Naive thymus-derived CD4-positive, alpha-beta T cell (primary cell): ENCODE measurements at regions of chr20 and their contacts with region 1.

Region 1: DNA sequence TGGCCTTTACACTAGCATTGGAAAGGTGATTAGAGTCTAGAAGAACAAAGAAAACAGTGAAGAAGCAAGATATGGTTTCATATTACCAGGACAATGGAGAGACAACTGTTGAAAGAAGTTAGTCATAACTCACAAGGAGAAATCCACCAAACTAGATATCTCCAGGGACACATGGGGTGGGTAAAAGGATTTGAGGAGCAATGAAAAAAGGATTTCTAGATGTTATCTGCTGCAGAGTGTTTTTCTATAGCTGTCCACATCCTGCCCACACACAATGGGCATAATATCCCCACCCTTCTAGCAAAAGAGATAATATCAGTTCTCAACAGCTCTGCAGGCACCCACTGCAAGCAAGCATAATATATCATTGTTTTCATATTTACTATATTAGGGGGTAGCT is 303.1 kb downstream of the HAO1 start:
- DNase-seq: no peak
- ATAC-seq: no peak
- H3K4me3 ChIP-seq: no peak overlapping the region
- H3K4me3 Mint-ChIP-seq: no peak overlapping the region
- H3K27ac ChIP-seq: no peak overlapping the region
- H3K27ac Mint-ChIP-seq: no peak overlapping the region
- H3K4me1 ChIP-seq: no peaks in the 10 kb centered on the region
- H3K4me1 Mint-ChIP-seq: no peaks in the 10 kb centered on the region
- H3K27me3 ChIP-seq: no peaks in the 10 kb centered on the region
- H3K27me3 Mint-ChIP-seq: no peaks in the 10 kb centered on the region

Region 2: GRCh38 chr20:7650086-7650879 is 13.1 kb after region 1 on chr20:
- CTCF ChIA-PET with region 1: no interaction called
- POLR2A ChIA-PET with region 1: no interaction called
- intact Hi-C with region 1: no loop called
- DNase-seq: no peak
- ATAC-seq: no peak
- H3K4me3 ChIP-seq: no peak overlapping the region
- H3K4me3 Mint-ChIP-seq: no peak overlapping the region
- H3K27ac ChIP-seq: no peak overlapping the region
- H3K27ac Mint-ChIP-seq: no peak overlapping the region
- H3K4me1 ChIP-seq: no peaks in the 10 kb centered on the region
- H3K4me1 Mint-ChIP-seq: no peaks in the 10 kb centered on the region
- H3K27me3 ChIP-seq: no peaks in the 10 kb centered on the region
- H3K27me3 Mint-ChIP-seq: no peaks in the 10 kb centered on the region

Region 3: DNA sequence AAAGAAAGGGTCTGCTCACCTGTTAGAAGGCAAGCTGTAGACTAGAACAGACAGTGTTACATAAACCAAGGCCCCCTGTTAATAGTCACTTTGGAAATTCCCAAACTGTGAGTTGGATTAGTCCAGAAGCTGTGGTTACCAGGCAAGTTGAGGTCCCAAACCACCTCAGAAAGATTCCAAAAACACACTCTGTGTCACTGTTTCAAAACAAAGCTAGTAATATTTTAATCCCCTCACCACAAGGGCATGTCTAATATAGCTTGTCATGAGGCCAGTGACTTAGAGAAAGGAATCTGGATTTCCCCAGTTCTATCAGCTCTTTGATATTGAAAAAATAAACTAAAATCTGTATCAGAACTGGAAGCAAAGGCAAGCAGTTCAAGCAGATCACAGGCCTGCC is 58.5 kb after region 1 on chr20:
- CTCF ChIA-PET with region 1: no interaction called
- POLR2A ChIA-PET with region 1: no interaction called
- intact Hi-C with region 1: loop called in 1 of 2 experiments (anchors 10 kb)
- DNase-seq: no peak
- ATAC-seq: no peak
- H3K4me3 ChIP-seq: no peak overlapping the region
- H3K4me3 Mint-ChIP-seq: no peak overlapping the region
- H3K27ac ChIP-seq: no peak overlapping the region
- H3K27ac Mint-ChIP-seq: no peak overlapping the region
- H3K4me1 ChIP-seq: no peaks in the 10 kb centered on the region
- H3K4me1 Mint-ChIP-seq: no peaks in the 10 kb centered on the region
- H3K27me3 ChIP-seq: no peaks in the 10 kb centered on the region
- H3K27me3 Mint-ChIP-seq: peaks cover 0 to 4% (median 0%) of the 10 kb centered on the region in 5 donors